ENCODE measurements at regions of chr16 and their contacts with region 1.

Region 1: DNA sequence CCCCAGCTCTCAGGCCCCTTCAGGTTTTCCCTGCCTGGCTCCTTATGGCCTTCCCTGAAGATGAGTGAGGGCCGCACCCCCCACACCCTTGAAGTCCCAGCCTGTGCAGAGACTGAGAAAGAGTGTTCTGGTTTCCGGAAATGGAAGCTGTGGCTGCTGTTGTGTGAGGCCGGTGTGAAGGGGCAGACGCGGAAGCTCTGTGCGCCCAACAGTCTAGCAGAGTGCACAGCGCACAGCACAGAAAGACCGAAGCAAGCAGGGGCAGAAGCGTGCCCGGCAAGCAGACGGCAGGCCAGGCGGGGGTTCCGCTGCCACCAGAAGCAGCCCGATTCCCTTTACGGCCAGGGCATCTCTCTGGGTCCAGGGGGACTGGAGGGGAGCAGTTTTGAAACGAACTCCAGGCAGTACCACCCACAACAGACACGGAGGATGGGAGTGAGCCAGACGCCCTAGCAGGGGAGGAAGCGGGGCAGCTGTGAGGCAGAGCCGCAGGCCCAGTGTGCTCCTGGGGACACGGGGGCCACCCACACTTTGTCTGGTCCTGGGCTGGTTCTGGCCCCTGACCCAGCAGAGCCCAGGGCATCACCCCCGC is 16.7 kb downstream of the TPSG1 start:
- DNase-seq: peak in 3 of 10 donors; percentile 19 to 32 (median 25)
- ATAC-seq: peak; percentile 79 to 90
- H3K4me3 Mint-ChIP-seq: peak overlapping the region; percentile 47 to 80 (median 70)
- H3K27ac Mint-ChIP-seq: peak overlapping the region in 7 of 10 donors; percentile 66 to 89 (median 85)
- H3K4me1 Mint-ChIP-seq: peaks cover 0 to 4% (median 2%) of the 10 kb centered on the region in 4 donors
- H3K27me3 Mint-ChIP-seq: no peaks in the 10 kb centered on the region

Region 2: GRCh38 chr16:2799866-2800239 is 1591.5 kb after region 1 on chr16:
- POLR2A ChIA-PET with region 1: interaction called, 10 read pairs
- DNase-seq: no peak
- ATAC-seq: no peak
- H3K4me3 Mint-ChIP-seq: no peak overlapping the region
- H3K27ac Mint-ChIP-seq: no peak overlapping the region
- H3K4me1 Mint-ChIP-seq: no peaks in the 10 kb centered on the region
- H3K27me3 Mint-ChIP-seq: peaks cover under 1 to 12% (median 7%) of the 10 kb centered on the region in 5 donors

Measured in naive thymus-derived CD8-positive, alpha-beta T cell (primary cell).